Endothelial cell of umbilical vein (primary cell): ENCODE measurements at regions of chr3 and their contacts with region 1.

Region 1: GRCh38 chr3:13895155-13896105 is 15.6 kb upstream of the WNT7A start:
- DNase-seq: peak; percentile 91
- H3K4me3 ChIP-seq: peak overlapping the region; percentile 22 to 54 (median 33)
- H3K27ac ChIP-seq: no peak overlapping the region
- H3K4me1 ChIP-seq: peaks cover 8% of the 10 kb centered on the region
- H3K27me3 ChIP-seq: no peaks in the 10 kb centered on the region
- CTCF ChIP-seq: no peak
- POLR2A ChIP-seq: no peak

Region 2: DNA sequence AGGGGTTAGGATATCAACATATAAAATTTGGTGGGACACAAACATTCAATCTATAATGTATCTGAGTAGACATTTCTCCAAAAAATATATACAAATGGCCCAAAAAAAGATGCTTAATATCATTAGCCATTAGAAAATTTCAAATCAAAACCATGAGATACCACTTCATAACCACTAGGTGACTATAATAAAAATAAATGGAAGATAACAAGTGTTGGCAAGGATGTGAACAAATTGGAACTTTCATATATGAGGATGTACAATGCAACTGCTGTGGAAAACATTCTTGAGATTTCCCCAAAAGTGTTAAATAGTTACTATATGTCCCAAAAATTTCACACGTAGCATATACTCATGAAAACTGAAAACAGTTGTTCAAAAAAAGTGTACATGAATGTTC is 20.9 kb after region 1 on chr3:
- CTCF ChIA-PET with region 1: no interaction called
- POLR2A ChIA-PET with region 1: no interaction called
- dilution Hi-C with region 1: no loop called
- intact Hi-C with region 1: no loop called
- DNase-seq: no peak
- H3K4me3 ChIP-seq: no peak overlapping the region
- H3K27ac ChIP-seq: no peak overlapping the region
- H3K4me1 ChIP-seq: no peaks in the 10 kb centered on the region
- H3K27me3 ChIP-seq: no peaks in the 10 kb centered on the region
- CTCF ChIP-seq: no peak
- POLR2A ChIP-seq: no peak

Region 3: GRCh38 chr3:14113965-14114635 is 218.7 kb after region 1 on chr3:
- CTCF ChIA-PET with region 1: interaction called, 23 read pairs
- POLR2A ChIA-PET with region 1: no interaction called
- dilution Hi-C with region 1: no loop called
- intact Hi-C with region 1: loop called (anchors 2 kb)
- DNase-seq: no peak
- H3K4me3 ChIP-seq: no peak overlapping the region
- H3K27ac ChIP-seq: no peak overlapping the region
- H3K4me1 ChIP-seq: no peaks in the 10 kb centered on the region
- H3K27me3 ChIP-seq: no peaks in the 10 kb centered on the region
- CTCF ChIP-seq: peak in 1 of 2 donors; percentile 8
- POLR2A ChIP-seq: no peak

Region 4: DNA sequence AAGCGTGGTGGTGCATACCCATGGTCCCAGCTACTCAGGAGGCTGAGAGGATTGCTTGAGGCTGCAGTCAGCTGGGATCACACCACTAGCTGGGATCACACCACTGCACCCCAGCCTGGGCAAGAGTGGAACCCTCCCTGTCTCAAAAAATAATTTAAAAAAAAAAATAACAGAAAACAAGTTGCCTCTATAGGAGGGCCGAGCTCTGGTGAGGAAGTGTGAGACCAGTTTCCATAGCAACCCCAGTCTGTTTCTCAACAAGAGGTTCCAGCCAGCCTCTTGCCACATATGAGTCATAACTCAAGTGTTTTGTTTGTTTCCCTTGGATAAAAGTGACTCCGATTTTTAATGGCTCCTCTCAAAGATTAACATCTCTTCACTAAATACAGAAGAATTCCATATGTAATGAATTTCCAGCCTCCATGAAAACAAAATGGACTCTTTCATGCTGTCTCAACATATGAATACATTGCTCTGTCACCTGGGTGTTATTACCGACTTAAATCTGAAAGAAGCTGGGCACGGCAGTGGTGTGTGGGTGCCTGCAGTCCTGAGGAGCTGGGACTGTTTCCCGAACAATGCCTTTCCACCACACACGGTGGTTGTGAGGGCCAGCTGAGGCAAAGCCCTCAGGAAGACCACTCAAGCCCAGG is 249.1 kb after region 1 on chr3:
- CTCF ChIA-PET with region 1: interaction called, 8 read pairs
- POLR2A ChIA-PET with region 1: interaction called, 3 read pairs
- dilution Hi-C with region 1: no loop called
- intact Hi-C with region 1: loop called (anchors 1 kb)
- DNase-seq: peak; percentile 97
- H3K4me3 ChIP-seq: peak overlapping the region in 1 of 3 experiments; percentile 20
- H3K27ac ChIP-seq: peak overlapping the region; percentile 100
- H3K4me1 ChIP-seq: peaks cover 41% of the 10 kb centered on the region
- H3K27me3 ChIP-seq: no peaks in the 10 kb centered on the region
- CTCF ChIP-seq: no peak
- POLR2A ChIP-seq: peak; percentile 69

Region 5: GRCh38 chr3:14261229-14261628 is 365.8 kb after region 1 on chr3:
- CTCF ChIA-PET with region 1: interaction called, 9 read pairs
- POLR2A ChIA-PET with region 1: no interaction called
- dilution Hi-C with region 1: no loop called
- intact Hi-C with region 1: loop called (anchors 1 kb)
- DNase-seq: peak; percentile 81
- H3K4me3 ChIP-seq: no peak overlapping the region
- H3K27ac ChIP-seq: no peak overlapping the region
- H3K4me1 ChIP-seq: no peaks in the 10 kb centered on the region
- H3K27me3 ChIP-seq: peaks cover 6 to 9% of the 10 kb centered on the region in 2 experiments
- CTCF ChIP-seq: peak; percentile 90 to 91
- POLR2A ChIP-seq: no peak

Region 6: GRCh38 chr3:14461748-14462324 is 566.4 kb after region 1 on chr3:
- CTCF ChIA-PET with region 1: interaction called, 14 read pairs
- POLR2A ChIA-PET with region 1: no interaction called
- dilution Hi-C with region 1: no loop called
- intact Hi-C with region 1: loop called (anchors 1 kb)
- DNase-seq: peak; percentile 73
- H3K4me3 ChIP-seq: no peak overlapping the region
- H3K27ac ChIP-seq: no peak overlapping the region
- H3K4me1 ChIP-seq: peaks cover 38% of the 10 kb centered on the region
- H3K27me3 ChIP-seq: no peaks in the 10 kb centered on the region
- CTCF ChIP-seq: peak; percentile 77 to 93
- POLR2A ChIP-seq: no peak

Region 7: DNA sequence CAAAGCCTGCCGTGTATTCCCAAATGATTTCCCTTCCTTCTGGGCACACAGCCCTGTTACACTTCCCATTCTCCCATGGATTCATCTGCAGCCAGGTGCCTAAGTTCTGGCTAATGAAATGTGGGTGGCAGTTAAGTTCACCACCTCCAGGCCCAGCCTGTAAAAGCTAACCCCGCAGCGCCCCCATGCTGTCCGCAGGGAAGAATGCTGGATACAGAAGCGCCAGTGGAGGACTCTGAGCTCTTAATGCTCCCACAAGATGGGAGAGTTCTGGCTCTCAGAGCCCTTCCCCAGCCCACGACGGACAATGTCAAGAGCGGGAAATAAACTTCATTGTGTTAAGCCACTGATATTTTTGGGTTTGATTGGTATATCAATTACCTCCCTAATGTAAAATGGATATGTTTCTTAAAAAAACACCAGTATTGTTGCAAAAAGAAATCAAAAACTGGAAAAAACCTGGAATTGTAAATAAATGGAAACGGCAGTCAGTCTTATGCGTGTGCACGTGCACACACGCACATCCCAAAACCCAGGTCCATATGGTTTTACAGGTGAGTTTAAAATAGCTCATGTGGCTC is 885.6 kb after region 1 on chr3:
- CTCF ChIA-PET with region 1: interaction called, 11 read pairs
- POLR2A ChIA-PET with region 1: no interaction called
- dilution Hi-C with region 1: no loop called
- intact Hi-C with region 1: no loop called
- DNase-seq: peak; percentile 62
- H3K4me3 ChIP-seq: no peak overlapping the region
- H3K27ac ChIP-seq: no peak overlapping the region
- H3K4me1 ChIP-seq: no peaks in the 10 kb centered on the region
- H3K27me3 ChIP-seq: peaks cover 6 to 14% of the 10 kb centered on the region in 2 experiments
- CTCF ChIP-seq: peak; percentile 63 to 74
- POLR2A ChIP-seq: no peak

Region 8: GRCh38 chr3:15098503-15099363 is 1203.3 kb after region 1 on chr3 and contains the start of gene RBSN:
- CTCF ChIA-PET with region 1: no interaction called
- POLR2A ChIA-PET with region 1: no interaction called
- dilution Hi-C with region 1: no loop called
- intact Hi-C with region 1: no loop called
- DNase-seq: peak; percentile 96
- H3K4me3 ChIP-seq: peak within 1 kb of the TSS; percentile 87 to 98 (median 89)
- H3K27ac ChIP-seq: peak within 1 kb of the TSS; percentile 45
- H3K4me1 ChIP-seq: peaks cover 13% of the 10 kb centered on the region
- H3K27me3 ChIP-seq: no peaks in the 10 kb centered on the region
- CTCF ChIP-seq: no peak
- POLR2A ChIP-seq: peak; percentile 69
- total RNA-seq, gene RBSN: 23.1 and 23.6 TPM in 2 replicates